ENCODE measurements at regions of chr17 and their contacts with region 1.

Region 1: GRCh38 chr17:39636927-39637736 is at the start of gene STARD3:
- DNase-seq: peak; percentile 79 to 93 (median 86)
- ATAC-seq: peak; percentile 88 to 90
- H3K4me3 Mint-ChIP-seq: peak within 1 kb of the TSS; percentile 88 to 97 (median 94)
- H3K27ac Mint-ChIP-seq: peak within 1 kb of the TSS; percentile 80 to 96 (median 93)
- H3K4me1 Mint-ChIP-seq: peaks cover 40 to 68% (median 67%) of the 10 kb centered on the region in 4 donors
- H3K27me3 Mint-ChIP-seq: peaks cover 0 to 1% (median 0%) of the 10 kb centered on the region in 5 donors
- polyA plus RNA-seq, gene STARD3: 37.4 to 51.6 (median 43.0) TPM

Region 2: DNA sequence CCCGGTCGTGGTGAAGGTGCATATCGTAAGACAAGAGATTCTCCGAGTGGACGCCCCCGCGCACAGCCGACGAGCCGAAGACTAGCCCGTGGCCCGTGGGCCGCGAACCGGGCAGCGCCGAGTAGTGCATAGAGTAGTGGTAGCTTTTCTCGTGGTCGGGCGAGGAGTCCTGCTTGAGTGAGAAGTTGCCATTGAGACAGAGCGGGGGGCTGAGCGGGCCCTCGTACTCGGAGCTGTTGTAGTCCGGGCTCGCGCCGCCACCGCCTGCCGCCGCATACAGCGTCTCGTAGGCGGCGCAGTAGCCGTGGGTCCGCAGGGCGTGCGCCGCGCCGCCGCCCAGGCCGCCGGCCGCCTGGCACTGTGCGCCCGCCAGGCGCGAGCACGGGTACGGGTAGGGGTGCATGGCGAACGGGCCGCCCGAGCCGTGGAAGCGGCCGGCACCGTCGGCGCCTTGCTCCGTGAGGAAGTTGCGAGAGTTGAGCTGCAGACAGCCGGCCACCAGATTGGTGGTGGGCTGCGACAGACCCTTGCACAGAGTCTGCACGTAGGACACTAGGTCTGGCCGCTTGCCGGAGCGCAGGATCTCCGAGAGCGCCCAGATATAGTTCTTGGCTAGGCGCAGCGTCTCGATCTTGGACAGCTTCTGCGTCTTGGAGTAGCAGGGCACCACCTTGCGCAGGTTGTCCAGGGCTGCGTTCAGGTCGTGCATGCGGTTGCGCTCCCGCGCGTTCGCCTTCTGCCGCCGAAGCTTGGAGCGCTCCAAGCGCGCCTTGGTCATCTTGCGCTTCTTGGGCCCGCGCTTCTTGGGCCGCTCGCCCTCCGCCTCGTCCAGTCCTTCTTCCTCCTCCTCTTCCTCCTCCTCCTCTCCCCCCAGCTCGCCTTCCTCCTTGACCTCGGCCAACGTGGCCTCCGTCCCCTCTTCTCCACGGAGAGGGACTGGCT is 31.4 kb before region 1 on chr17:
- POLR2A ChIA-PET with region 1: no interaction called
- DNase-seq: no peak
- ATAC-seq: peak; percentile 32 to 43
- H3K4me3 Mint-ChIP-seq: peak overlapping the region in 9 of 10 donors; percentile 30 to 72 (median 64)
- H3K27ac Mint-ChIP-seq: no peak overlapping the region
- H3K4me1 Mint-ChIP-seq: peaks cover 6 to 30% (median 25%) of the 10 kb centered on the region in 4 donors
- H3K27me3 Mint-ChIP-seq: peaks cover 31 to 81% (median 49%) of the 10 kb centered on the region in 5 donors

Region 3: GRCh38 chr17:39621523-39622379 is 15.4 kb before region 1 on chr17:
- POLR2A ChIA-PET with region 1: interaction called, 15 read pairs
- DNase-seq: peak; percentile 75 to 98 (median 87)
- ATAC-seq: peak; percentile 54 to 67
- H3K4me3 Mint-ChIP-seq: peak overlapping the region; percentile 26 to 82 (median 51)
- H3K27ac Mint-ChIP-seq: peak overlapping the region in 9 of 10 donors; percentile 5 to 75 (median 57)
- H3K4me1 Mint-ChIP-seq: peaks cover 15 to 41% (median 29%) of the 10 kb centered on the region in 4 donors
- H3K27me3 Mint-ChIP-seq: peaks cover 8 to 25% (median 18%) of the 10 kb centered on the region in 5 donors

Region 4: DNA sequence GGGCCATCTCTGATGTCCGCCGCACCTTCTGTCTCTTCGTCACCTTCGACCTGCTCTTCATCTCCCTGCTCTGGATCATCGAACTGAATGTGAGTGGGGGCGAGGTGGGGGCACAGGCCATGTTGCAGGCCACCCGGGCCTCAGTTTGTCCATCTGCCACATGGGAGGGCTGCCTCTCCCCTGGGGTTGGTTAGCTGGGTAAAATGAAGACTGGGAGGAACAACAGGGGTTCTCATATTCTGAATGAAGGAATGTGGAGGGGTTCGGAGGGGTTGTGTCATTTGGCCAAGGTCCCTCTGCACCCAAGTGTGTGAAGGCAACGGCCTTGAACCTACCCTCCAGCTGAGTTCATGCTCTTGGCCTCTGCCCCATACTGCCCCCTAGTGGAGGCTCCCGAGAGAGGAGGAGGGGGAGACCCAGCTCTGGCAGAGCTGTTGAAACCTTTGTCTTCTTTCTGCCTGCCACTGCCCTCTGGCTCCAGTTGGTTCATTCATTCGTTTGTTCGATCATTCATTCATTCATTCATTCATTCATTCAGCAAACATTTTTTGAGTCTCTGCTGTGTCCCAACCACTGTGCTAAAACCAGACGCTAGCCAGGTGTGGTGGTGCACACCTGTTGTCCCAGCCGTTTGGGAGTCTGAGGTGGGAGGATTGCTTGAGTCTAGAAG is 16.7 kb after region 1 on chr17:
- POLR2A ChIA-PET with region 1: interaction called, 10 read pairs
- DNase-seq: peak; percentile 56 to 88 (median 76)
- ATAC-seq: peak; percentile 50 to 62
- H3K4me3 Mint-ChIP-seq: peak overlapping the region in 2 of 10 donors; percentile 15 to 18
- H3K27ac Mint-ChIP-seq: peak overlapping the region in 7 of 10 donors; percentile 23 to 82 (median 61)
- H3K4me1 Mint-ChIP-seq: peaks cover 39 to 79% (median 69%) of the 10 kb centered on the region in 4 donors
- H3K27me3 Mint-ChIP-seq: no peaks in the 10 kb centered on the region

Region 5: DNA sequence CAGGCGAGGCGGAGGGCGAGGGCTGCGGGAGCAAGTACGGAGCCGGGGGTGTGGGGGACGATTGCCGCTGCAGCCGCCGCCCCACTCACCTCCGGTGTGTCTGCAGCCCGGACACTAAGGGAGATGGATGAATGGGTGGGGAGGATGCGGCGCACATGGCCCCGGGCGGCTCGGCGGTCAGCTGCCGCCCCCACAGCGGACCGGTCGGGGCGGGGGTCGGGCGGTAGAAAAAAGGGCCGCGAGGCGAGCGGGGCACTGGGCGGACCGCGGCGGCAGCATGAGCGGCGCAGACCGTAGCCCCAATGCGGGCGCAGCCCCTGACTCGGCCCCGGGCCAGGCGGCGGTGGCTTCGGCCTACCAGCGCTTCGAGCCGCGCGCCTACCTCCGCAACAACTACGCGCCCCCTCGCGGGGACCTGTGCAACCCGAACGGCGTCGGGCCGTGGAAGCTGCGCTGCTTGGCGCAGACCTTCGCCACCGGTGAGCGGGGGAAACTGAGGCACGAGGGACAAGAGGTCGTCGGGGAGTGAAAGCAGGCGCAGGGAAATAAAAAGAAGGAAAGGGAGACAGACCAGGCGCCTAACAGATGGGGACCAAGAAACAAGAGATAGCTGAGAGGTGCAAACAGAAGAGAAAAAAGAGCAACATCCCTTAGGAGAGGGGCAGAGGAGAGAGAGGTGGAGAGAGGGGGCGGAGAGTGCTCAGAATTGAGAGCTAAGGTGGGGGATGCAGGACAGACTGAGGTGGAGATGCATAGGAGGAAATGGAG is 31.3 kb after region 1 on chr17 and contains the start of gene PNMT:
- POLR2A ChIA-PET with region 1: interaction called, 26 read pairs
- DNase-seq: peak; percentile 45 to 84 (median 66)
- ATAC-seq: peak; percentile 76 to 80
- H3K4me3 Mint-ChIP-seq: peak within 1 kb of the TSS; percentile 62 to 87 (median 74)
- H3K27ac Mint-ChIP-seq: peak within 1 kb of the TSS in 6 of 10 donors; percentile 61 to 92 (median 74)
- H3K4me1 Mint-ChIP-seq: peaks cover 15 to 43% (median 32%) of the 10 kb centered on the region in 4 donors
- H3K27me3 Mint-ChIP-seq: peaks cover 0 to 16% (median 4%) of the 10 kb centered on the region in 5 donors
- polyA plus RNA-seq, gene PNMT: 0.43 to 0.64 TPM in 2 of 3 donors, not detected in the other